ENCODE measurements at regions of chr1 and their contacts with region 1.

Region 1: DNA sequence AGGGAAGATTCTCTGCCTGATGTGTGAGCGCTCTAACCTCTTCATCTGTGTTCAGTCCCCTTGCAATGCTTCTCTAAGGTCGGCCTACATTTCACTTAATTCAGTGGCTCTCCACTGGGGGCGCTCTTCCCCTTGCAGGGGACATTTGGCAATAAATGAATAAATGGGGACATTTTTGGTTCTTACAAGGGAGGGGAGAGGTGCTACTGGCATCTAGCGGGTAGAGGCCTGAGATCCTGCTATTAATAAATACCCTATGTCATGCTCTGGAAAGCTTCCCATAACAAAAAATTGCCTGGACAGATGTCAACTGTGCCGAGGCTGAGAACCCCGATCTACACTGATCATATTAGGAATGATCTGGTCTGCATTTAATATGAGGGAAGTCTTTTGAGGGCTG is 25.9 kb upstream of the DNAJC11 start:
- DNase-seq: peak; percentile 73
- ATAC-seq: peak; percentile 76
- H3K4me3 Mint-ChIP-seq: no peak overlapping the region
- H3K27ac Mint-ChIP-seq: no peak overlapping the region
- H3K4me1 Mint-ChIP-seq: no peaks in the 10 kb centered on the region
- H3K27me3 Mint-ChIP-seq: peaks cover 3% of the 10 kb centered on the region
- CTCF ChIP-seq: peak; percentile 95

Region 2: GRCh38 chr1:6711174-6711573 is 16.4 kb before region 1 on chr1:
- CTCF ChIA-PET with region 1: no interaction called
- POLR2A ChIA-PET with region 1: no interaction called
- intact Hi-C with region 1: no loop called
- DNase-seq: no peak
- ATAC-seq: no peak
- H3K4me3 Mint-ChIP-seq: no peak overlapping the region
- H3K27ac Mint-ChIP-seq: no peak overlapping the region
- H3K4me1 Mint-ChIP-seq: no peaks in the 10 kb centered on the region
- H3K27me3 Mint-ChIP-seq: peaks cover 9% of the 10 kb centered on the region
- CTCF ChIP-seq: no peak

Region 3: DNA sequence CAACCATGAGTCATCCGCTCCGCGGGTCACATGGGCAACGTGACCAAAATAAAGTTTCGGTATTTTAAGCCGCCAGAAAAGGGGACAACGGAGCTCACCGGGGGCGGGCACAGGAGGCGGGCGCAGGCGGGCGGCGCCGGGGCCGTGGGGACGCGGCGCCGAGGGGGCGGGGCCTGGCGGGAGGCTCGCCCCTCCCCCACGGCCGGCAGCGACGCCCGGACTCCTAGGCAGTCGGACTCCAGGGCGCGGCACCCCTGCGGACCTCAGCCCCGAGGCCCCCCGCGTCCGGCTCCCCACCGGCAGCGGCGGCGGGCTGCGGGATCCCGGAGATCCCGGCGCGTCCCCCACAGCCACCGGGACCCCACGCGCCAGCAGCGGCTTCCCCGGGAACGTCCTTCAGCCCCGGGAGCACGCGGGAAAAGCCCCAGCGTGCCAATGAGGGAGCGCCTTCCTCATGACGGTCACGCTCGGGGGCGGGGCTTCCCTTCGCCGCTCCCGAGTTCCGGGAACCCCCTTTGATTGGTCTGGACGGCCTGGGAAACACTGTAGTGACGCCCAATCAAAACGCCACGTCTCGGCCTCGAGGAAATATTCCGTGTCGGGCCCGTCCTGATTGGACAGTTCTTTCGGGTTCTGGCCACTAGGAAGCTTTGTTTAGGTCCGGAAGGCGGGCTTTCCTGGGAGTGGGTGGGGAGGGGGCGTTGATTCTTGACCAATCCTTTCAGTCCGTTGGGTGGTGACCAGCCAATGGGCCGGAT is 57.2 kb after region 1 on chr1:
- CTCF ChIA-PET with region 1: no interaction called
- POLR2A ChIA-PET with region 1: no interaction called
- intact Hi-C with region 1: loop called (anchors 10 kb)
- DNase-seq: peak; percentile 100
- ATAC-seq: peak; percentile 82
- H3K4me3 Mint-ChIP-seq: peak overlapping the region; percentile 80
- H3K27ac Mint-ChIP-seq: peak overlapping the region; percentile 85
- H3K4me1 Mint-ChIP-seq: peaks cover 39% of the 10 kb centered on the region
- H3K27me3 Mint-ChIP-seq: no peaks in the 10 kb centered on the region
- CTCF ChIP-seq: no peak

Measured in activated CD8-positive, alpha-beta T cell treated with anti-CD3 and anti-CD28 coated beads for 36 hours (primary cell).